ENCODE measurements at regions of chr5 and their contacts with region 1.

Region 1: DNA sequence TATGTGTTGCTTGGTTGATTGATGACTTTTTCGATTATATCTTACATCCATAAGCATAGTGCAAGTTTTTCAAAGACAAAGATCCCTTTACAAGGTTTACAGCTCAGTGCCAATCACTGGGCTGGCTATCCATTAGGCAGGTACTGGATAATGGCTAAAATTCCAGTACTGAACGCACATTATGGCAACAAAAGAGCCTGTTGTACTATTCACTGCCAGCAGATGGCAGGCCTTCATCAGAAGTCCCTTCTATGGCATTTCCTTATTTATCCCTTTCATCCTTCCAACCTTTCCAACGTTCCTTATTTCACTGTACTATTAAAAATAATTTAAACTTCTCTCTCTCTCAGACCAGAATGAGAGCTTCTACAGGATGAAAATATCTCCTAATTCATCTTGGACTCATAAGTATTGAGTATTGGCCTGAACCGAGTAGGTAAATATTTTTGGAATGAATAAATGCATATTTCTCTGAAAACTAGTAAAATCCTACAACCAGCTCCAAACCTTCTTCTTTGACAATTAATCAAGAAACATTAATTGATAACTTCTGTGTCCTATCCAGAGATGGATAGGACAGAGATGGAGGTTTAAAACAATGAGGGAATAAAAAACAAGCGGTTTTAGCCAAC is 6.7 kb upstream of the WNT8A start:
- DNase-seq: peak in 1 of 2 experiments; percentile 82
- H3K4me3 ChIP-seq: no peak overlapping the region
- H3K27ac ChIP-seq: no peak overlapping the region
- H3K4me1 ChIP-seq: peaks cover 4 to 10% (median 8%) of the 10 kb centered on the region in 4 experiments; a peak in 4 of 7 replicates
- H3K27me3 ChIP-seq: peaks cover 0 to 2% (median 0%) of the 10 kb centered on the region in 4 experiments; a peak in 1 of 7 replicates
- CTCF ChIP-seq: peak in 2 of 3 experiments; percentile 85 to 87; a peak in 3 of 4 replicates
- EP300 ChIP-seq: no peak; a peak in 1 of 3 replicates
- POLR2A ChIP-seq: no peak
- RAD21 ChIP-seq: peak; percentile 96

Region 2: DNA sequence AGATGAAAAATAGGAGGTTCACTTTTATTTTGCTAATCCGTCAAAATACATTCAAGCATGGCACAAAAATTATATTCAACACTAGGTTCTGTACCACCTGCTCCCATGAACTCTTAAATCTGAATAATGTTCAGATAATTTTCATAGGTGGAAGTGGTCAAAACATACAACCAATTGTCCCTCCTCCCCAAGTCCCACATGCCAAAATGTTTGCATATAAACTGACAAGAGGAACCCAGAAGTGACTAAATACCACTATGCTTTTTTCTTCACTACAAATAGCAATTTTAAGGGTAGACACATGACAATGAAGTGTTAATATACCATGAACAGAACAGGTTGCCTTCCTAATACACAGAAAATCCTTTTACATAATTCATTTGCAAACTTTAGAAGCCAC is 326.7 kb before region 1 on chr5:
- CTCF ChIA-PET with region 1: no interaction called
- POLR2A ChIA-PET with region 1: no interaction called
- DNase-seq: no peak
- H3K4me3 ChIP-seq: peak overlapping the region in 3 of 4 experiments; percentile 6 to 92 (median 11); a peak in 5 of 8 replicates
- H3K27ac ChIP-seq: no peak overlapping the region
- H3K4me1 ChIP-seq: peaks cover 0 to 3% (median 0%) of the 10 kb centered on the region in 4 experiments; a peak in 3 of 7 replicates
- H3K27me3 ChIP-seq: no peaks in the 10 kb centered on the region
- CTCF ChIP-seq: no peak
- EP300 ChIP-seq: no peak
- POLR2A ChIP-seq: no peak
- RAD21 ChIP-seq: no peak

Region 3: GRCh38 chr5:138035605-138036537 is 41.3 kb before region 1 on chr5:
- CTCF ChIA-PET with region 1: interaction called, 43 read pairs
- POLR2A ChIA-PET with region 1: no interaction called
- DNase-seq: peak; percentile 53 to 57
- H3K4me3 ChIP-seq: no peak overlapping the region; a peak in 1 of 8 replicates
- H3K27ac ChIP-seq: no peak overlapping the region
- H3K4me1 ChIP-seq: peaks cover 3 to 6% (median 4%) of the 10 kb centered on the region in 4 experiments; a peak in 3 of 7 replicates
- H3K27me3 ChIP-seq: no peaks in the 10 kb centered on the region
- CTCF ChIP-seq: peak; percentile 40 to 98 (median 83)
- EP300 ChIP-seq: no peak
- POLR2A ChIP-seq: no peak
- RAD21 ChIP-seq: peak; percentile 76 to 80

Region 4: DNA sequence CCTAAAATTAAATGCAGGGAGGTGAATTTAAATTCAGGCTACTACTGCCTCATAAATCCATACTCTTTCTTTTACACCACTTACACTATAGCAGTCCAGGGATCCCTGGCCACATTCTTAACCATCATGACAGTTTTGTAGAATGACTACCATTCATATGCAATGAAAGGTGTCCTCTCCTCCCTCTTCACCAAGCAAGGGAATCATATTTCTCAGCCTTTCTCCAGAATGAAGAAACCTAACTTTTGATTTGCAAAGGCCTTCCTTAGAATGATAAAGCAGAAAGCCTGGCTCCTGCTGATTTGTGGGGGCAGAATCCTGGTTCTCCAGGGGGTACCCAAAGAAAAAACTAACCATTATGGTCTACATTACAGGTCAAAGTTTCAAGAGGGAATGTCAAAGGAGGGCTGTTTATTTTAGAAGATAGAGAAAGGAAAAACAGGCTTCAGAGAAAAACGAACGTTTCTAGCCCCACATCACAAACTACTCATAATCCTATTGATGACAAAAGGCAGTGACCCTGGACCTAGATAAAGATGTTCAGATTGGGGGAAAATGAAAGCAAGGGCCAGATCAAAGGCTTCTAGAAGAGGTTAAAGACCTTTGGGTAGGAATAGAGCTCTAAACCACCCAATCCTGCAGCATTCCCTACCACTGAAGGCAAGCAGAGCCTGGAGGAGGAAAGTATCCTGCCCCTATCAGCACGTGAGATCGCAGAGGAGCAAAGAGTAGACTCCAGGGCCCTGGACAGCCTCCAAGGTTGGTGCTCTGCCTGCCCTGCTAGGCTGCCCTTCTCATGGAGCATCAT is 18.1 kb after region 1 on chr5:
- CTCF ChIA-PET with region 1: interaction called, 35 read pairs
- POLR2A ChIA-PET with region 1: interaction called, 4 read pairs
- DNase-seq: peak in 1 of 2 experiments; percentile 55
- H3K4me3 ChIP-seq: peak overlapping the region in 1 of 4 experiments; percentile 48; a peak in 3 of 8 replicates
- H3K27ac ChIP-seq: no peak overlapping the region
- H3K4me1 ChIP-seq: peaks cover 13 to 27% (median 26%) of the 10 kb centered on the region in 4 experiments
- H3K27me3 ChIP-seq: peaks cover 46 to 74% (median 65%) of the 10 kb centered on the region in 4 experiments
- CTCF ChIP-seq: no peak
- EP300 ChIP-seq: peak in 1 of 2 experiments; percentile 66; a peak in 1 of 3 replicates
- POLR2A ChIP-seq: no peak
- RAD21 ChIP-seq: no peak

Region 5: GRCh38 chr5:138110266-138110963 is 33.2 kb after region 1 on chr5:
- CTCF ChIA-PET with region 1: interaction called, 23 read pairs
- POLR2A ChIA-PET with region 1: no interaction called
- DNase-seq: no peak
- H3K4me3 ChIP-seq: no peak overlapping the region
- H3K27ac ChIP-seq: no peak overlapping the region
- H3K4me1 ChIP-seq: peaks cover 0 to 9% (median 5%) of the 10 kb centered on the region in 4 experiments; a peak in 5 of 7 replicates
- H3K27me3 ChIP-seq: no peaks in the 10 kb centered on the region
- CTCF ChIP-seq: no peak
- EP300 ChIP-seq: no peak
- POLR2A ChIP-seq: no peak
- RAD21 ChIP-seq: no peak

Region 6: DNA sequence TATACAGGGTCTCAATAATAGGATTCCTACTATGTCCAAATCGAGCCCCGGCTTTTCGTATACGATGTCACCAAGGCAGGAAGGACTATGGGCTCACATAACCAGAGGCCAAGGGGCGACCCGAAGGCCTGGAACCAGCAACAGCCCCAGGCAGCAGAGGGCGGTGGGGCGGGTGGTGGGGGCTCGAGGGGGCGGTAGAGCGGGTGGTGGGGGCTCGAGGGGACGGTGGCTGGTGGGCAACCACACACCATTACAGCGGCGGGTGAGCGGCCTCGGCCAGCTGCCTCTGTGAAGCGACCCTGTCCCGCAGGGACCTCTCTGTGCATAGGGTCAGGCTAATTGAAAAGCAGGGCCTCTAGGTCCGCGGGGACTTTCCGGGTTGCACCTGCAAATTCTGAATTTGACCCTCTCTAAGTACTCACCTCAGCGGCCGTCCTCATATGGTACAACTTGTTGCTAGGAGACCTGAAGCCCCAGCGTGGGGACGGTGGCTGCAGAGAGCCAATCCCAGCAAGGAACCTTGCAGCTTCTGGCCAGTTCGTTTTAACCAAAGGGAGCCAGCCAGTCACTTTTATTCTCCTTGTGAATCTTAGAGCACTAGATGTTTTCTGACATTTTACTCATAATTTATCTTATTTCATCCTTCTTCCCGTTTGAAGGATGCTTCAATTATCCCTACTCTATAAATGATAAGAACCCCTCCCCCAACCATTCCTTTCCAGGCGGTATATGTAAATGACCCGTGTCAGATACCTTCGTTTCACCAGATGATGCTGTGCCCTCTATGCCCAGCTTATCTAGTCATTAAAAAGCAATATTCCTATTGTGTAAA is 62.0 kb after region 1 on chr5 and contains the start of gene NME5:
- CTCF ChIA-PET with region 1: interaction called, 288 read pairs
- POLR2A ChIA-PET with region 1: no interaction called
- DNase-seq: peak; percentile 43 to 83
- H3K4me3 ChIP-seq: peak within 1 kb of the TSS; percentile 59 to 78 (median 66)
- H3K27ac ChIP-seq: no peak within 1 kb of the TSS
- H3K4me1 ChIP-seq: no peaks in the 10 kb centered on the region; a peak in 1 of 7 replicates
- H3K27me3 ChIP-seq: no peaks in the 10 kb centered on the region
- CTCF ChIP-seq: no peak
- EP300 ChIP-seq: no peak
- POLR2A ChIP-seq: no peak
- RAD21 ChIP-seq: no peak
- total RNA-seq, gene NME5: 0.63 and 0.89 TPM in 2 replicates